ENCODE measurements at regions of chr14 and their contacts with region 1.

Region 1: DNA sequence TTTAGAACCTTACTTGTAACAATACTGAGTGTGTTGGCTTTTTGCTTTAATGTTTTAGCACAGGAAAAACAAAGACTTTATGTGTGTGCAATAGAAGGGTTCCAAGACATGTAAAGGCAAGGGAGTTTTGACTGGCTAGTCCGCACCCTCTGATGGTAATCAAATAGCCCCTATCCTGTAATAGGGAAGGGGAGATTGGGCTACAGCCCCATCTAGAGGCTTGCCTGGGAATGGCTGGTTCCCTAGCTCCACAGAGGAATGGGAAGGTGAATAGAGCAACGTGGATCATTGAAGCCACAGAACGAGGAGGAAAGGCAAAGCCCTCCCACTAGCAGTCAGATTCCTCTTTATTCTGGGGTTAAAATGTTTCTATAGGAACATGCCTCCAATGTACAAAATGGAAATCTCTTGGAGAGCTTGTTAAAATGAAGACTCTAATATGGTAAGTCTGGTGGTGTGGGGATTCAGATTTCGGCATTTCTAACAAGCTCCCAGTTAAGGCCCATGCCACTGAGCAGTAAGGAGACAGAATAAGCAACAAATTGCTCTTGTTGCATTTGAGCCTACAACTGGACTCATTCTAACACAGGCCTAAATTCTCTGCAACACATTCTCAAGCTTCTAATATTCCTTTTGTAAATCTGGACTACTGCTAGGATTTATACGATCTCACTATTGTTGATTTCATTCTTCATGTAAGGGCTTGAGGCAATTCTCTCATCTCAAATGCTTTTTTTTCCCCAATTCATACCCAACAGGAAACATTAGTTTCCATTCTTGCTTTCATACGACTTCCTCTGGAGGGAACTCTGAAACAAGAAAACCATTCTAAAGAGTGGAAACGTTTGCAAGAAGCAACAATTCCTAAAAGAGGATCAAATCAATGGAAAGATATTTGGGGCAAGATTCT is 57.1 kb downstream of the NIN start:
- DNase-seq: peak in 2 of 3 donors; percentile 22 to 33
- H3K4me3 ChIP-seq: no peak overlapping the region
- H3K27ac ChIP-seq: no peak overlapping the region
- H3K4me1 ChIP-seq: peaks cover 1 to 11% (median 6%) of the 10 kb centered on the region in 4 experiments
- H3K27me3 ChIP-seq: no peaks in the 10 kb centered on the region

Region 2: DNA sequence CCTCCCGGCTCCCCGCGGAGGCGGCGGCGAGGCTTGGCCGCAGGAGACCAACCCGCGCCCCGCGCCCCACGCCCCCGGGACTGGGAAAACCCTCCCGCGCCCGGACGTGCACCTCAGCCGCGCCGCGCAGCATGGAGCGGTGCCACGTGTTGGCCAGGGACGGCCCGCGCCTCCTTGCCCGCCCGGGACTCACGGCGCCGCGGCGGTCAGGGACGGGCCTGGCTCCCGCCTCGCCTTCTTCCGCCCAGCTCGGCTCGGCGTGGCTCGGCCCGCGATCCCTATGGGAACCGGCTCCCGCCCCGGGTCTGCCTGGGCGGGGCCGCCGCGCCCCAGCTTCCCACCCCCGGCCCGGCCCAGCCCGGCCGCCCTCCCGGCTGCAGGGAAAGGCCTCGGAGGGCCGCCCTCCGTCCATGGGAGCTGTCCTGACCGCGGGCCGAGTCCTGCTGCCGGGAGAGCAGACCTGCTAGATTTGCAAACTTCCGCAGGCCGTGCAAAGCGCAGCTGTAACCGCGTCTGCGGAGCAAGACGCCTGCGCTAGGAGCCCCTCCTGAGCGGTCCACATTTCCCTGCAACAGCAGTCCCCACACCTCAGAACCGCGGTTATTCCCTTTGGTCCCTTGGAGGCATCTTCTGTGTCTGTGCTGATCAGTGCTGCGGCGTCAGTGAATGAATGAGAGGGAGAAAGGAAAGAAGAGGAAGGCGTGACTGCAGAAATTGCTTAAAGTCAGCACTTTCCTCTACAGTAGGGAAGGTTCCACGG is 377.1 kb before region 1 on chr14 and contains the start of gene CDKL1:
- CTCF ChIA-PET with region 1: no interaction called
- POLR2A ChIA-PET with region 1: no interaction called
- DNase-seq: peak; percentile 30 to 74 (median 64)
- H3K4me3 ChIP-seq: peak within 1 kb of the TSS; percentile 36 to 86 (median 72)
- H3K27ac ChIP-seq: peak within 1 kb of the TSS in 1 of 2 experiments; percentile 5
- H3K4me1 ChIP-seq: peaks cover 0 to 21% (median 15%) of the 10 kb centered on the region in 4 experiments
- H3K27me3 ChIP-seq: no peaks in the 10 kb centered on the region

Region 3: DNA sequence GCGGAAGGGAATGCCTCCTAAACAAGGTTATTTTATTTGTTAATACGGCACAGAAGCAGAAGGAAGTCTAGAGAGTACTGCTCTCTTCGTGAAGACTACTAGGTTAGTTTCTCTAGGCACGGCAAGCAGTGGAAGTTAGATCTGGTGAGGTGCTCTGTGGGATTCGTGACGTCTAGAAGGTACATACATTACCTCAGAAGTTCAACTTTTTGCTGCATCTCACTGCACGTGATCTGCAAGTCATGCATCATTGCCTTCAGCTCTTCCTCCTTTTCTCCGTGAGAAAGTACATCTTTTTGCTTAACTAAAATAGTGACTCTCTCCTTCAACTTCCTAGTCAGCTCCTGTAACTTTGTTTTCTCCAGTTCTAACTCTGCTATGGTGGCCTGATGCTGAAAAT is 17.6 kb before region 1 on chr14:
- CTCF ChIA-PET with region 1: interaction called, 13 read pairs
- POLR2A ChIA-PET with region 1: no interaction called
- DNase-seq: peak; percentile 15 to 40 (median 31)
- H3K4me3 ChIP-seq: no peak overlapping the region
- H3K27ac ChIP-seq: peak overlapping the region in 1 of 2 experiments; percentile 38
- H3K4me1 ChIP-seq: no peaks in the 10 kb centered on the region
- H3K27me3 ChIP-seq: no peaks in the 10 kb centered on the region

Region 4: GRCh38 chr14:50762001-50762930 is 11.6 kb before region 1 on chr14:
- CTCF ChIA-PET with region 1: interaction called, 70 read pairs
- POLR2A ChIA-PET with region 1: interaction called, 3 read pairs
- DNase-seq: no peak
- H3K4me3 ChIP-seq: no peak overlapping the region
- H3K27ac ChIP-seq: peak overlapping the region in 1 of 2 experiments; percentile 10
- H3K4me1 ChIP-seq: no peaks in the 10 kb centered on the region
- H3K27me3 ChIP-seq: no peaks in the 10 kb centered on the region

Region 5: GRCh38 chr14:50785457-50786063 is 11.7 kb after region 1 on chr14:
- CTCF ChIA-PET with region 1: interaction called, 119 read pairs
- POLR2A ChIA-PET with region 1: interaction called, 3 read pairs
- DNase-seq: peak in 2 of 3 donors; percentile 30 to 43
- H3K4me3 ChIP-seq: peak overlapping the region in 4 of 7 experiments; percentile 26 to 37 (median 34)
- H3K27ac ChIP-seq: no peak overlapping the region
- H3K4me1 ChIP-seq: peaks cover 17 to 40% (median 24%) of the 10 kb centered on the region in 4 experiments
- H3K27me3 ChIP-seq: no peaks in the 10 kb centered on the region

Region 6: DNA sequence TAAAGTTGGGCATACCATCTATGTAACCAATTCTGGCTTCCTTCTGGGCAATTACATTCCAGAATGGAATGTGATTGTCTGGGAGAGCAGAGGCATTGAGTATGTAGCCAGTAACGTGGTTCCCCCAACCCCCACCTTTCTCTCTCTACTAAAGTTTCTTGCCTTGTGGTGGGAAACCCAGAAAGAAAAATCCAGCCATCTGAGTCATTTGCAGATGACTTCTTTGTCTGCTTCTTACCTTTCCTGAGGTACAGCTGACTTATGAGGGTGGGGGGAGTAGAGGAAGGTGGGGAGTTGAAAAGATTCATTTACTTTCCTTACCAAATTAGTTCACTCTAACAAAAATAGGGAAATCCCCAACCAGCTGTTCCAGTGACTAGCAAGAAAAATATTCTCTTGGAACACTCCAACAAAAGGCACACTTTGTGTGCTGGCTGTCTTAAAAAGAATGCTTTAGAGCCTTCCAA is 765.7 kb after region 1 on chr14:
- CTCF ChIA-PET with region 1: no interaction called
- POLR2A ChIA-PET with region 1: no interaction called
- DNase-seq: no peak
- H3K4me3 ChIP-seq: no peak overlapping the region
- H3K27ac ChIP-seq: no peak overlapping the region
- H3K4me1 ChIP-seq: peaks cover 0 to 4% (median 2%) of the 10 kb centered on the region in 4 experiments
- H3K27me3 ChIP-seq: no peaks in the 10 kb centered on the region